Activated T-helper 2 cell treated with anti-CD3 and anti-CD28 coated beads, Interferon-gamma antibody, Interleukin-2, Interleukin-4, amounts not matched to agents 10 μg/mL and 5 μg/mL and 100 μg/mL, durations not matched to agents 14 hours and 24 hours and 36 hours (primary cell): ENCODE measurements at regions of chr16 and their contacts with region 1.

Region 1: GRCh38 chr16:78503602-78504001 is 404.1 kb downstream of the WWOX start:
- DNase-seq: peak; percentile 11
- H3K4me3 Mint-ChIP-seq: no peak overlapping the region
- H3K27ac Mint-ChIP-seq: no peak overlapping the region
- H3K4me1 Mint-ChIP-seq: no peaks in the 10 kb centered on the region
- H3K27me3 Mint-ChIP-seq: no peaks in the 10 kb centered on the region

Region 2: GRCh38 chr16:76862901-76863300 is 1640.7 kb before region 1 on chr16:
- intact Hi-C with region 1: no loop called
- DNase-seq: no peak
- H3K4me3 Mint-ChIP-seq: no peak overlapping the region
- H3K27ac Mint-ChIP-seq: no peak overlapping the region
- H3K4me1 Mint-ChIP-seq: no peaks in the 10 kb centered on the region
- H3K27me3 Mint-ChIP-seq: no peaks in the 10 kb centered on the region

Region 3: GRCh38 chr16:78461496-78462191 is 42.0 kb before region 1 on chr16:
- intact Hi-C with region 1: no loop called
- DNase-seq: no peak
- H3K4me3 Mint-ChIP-seq: no peak overlapping the region
- H3K27ac Mint-ChIP-seq: no peak overlapping the region
- H3K4me1 Mint-ChIP-seq: no peaks in the 10 kb centered on the region
- H3K27me3 Mint-ChIP-seq: no peaks in the 10 kb centered on the region

Region 4: GRCh38 chr16:78472701-78473699 is 30.6 kb before region 1 on chr16:
- intact Hi-C with region 1: no loop called
- DNase-seq: no peak
- H3K4me3 Mint-ChIP-seq: no peak overlapping the region
- H3K27ac Mint-ChIP-seq: no peak overlapping the region
- H3K4me1 Mint-ChIP-seq: no peaks in the 10 kb centered on the region
- H3K27me3 Mint-ChIP-seq: no peaks in the 10 kb centered on the region

Region 5: GRCh38 chr16:78543023-78543422 is 39.4 kb after region 1 on chr16:
- intact Hi-C with region 1: no loop called
- DNase-seq: no peak
- H3K4me3 Mint-ChIP-seq: no peak overlapping the region
- H3K27ac Mint-ChIP-seq: no peak overlapping the region
- H3K4me1 Mint-ChIP-seq: no peaks in the 10 kb centered on the region
- H3K27me3 Mint-ChIP-seq: no peaks in the 10 kb centered on the region

Region 6: DNA sequence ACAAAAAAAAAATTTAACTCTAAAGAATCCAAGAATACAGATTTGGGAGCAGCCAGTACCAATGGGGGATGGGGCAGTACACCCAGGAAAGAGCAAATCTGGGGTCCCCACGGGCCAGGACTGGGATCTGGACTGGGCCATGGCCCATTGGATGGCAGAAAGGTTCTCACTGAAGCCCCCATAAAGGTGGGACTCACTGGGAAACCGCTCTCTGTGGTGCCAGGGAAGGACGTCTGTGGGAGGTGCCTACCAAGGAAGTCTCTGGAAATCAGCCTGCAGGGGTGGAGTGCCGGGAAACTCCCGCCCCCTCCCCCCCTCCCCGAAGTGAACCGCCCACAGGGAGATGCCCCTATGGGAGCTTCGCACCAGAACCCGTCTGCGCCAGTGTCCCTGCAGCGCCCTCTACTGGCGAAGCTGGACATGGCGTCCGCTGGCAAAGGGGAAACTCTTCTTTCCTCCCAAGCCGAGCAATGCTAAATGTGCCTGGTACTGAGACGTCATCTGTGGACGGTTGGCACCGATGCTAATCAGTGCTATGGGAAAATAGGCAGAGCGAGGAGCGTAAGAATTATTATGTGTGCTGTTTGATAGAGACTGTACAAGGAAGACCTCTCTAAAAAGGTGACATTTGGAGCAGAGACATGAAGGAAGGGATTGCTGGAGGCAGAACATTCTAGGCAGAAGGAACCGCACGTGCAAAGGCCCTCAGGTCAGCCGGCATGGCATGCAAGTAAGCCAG is 266.9 kb after region 1 on chr16:
- intact Hi-C with region 1: loop called (anchors 1 kb)
- DNase-seq: peak; percentile 62
- H3K4me3 Mint-ChIP-seq: no peak overlapping the region
- H3K27ac Mint-ChIP-seq: peak overlapping the region; percentile 2
- H3K4me1 Mint-ChIP-seq: peaks cover 35% of the 10 kb centered on the region
- H3K27me3 Mint-ChIP-seq: peaks cover 7% of the 10 kb centered on the region

Region 7: DNA sequence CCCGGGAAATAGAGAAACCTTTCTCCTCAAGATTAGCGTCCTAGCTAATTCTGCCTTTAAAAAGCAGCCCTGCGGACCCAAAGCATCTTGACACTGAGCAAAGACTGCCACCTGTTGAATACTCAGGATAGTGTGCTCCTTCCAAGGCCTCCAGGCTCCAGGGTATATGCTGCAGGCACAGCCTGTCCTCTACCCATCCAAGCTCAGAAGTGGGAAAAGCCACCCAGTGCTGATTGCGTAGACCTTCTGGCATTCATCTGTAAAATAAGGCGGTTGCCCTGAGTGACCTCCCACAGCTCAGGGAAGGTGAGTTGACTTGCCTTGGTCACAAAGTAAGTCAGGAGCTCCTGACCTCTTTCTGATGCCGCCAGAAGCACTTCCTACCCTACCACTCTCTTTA is 1581.1 kb after region 1 on chr16:
- intact Hi-C with region 1: loop called (anchors 10 kb)
- DNase-seq: peak; percentile 10
- H3K4me3 Mint-ChIP-seq: no peak overlapping the region
- H3K27ac Mint-ChIP-seq: no peak overlapping the region
- H3K4me1 Mint-ChIP-seq: no peaks in the 10 kb centered on the region
- H3K27me3 Mint-ChIP-seq: peaks cover 1% of the 10 kb centered on the region

Region 8: GRCh38 chr16:80466024-80466987 is 1962.7 kb after region 1 on chr16:
- intact Hi-C with region 1: loop called (anchors 2 kb)
- DNase-seq: peak; percentile 46
- H3K4me3 Mint-ChIP-seq: no peak overlapping the region
- H3K27ac Mint-ChIP-seq: no peak overlapping the region
- H3K4me1 Mint-ChIP-seq: no peaks in the 10 kb centered on the region
- H3K27me3 Mint-ChIP-seq: peaks cover 11% of the 10 kb centered on the region